A549 (cell line): ENCODE measurements at regions of chr2 and their contacts with region 1.

Region 1: GRCh38 chr2:207769597-207770486 is at the start of gene FZD5:
- DNase-seq: peak; percentile 93 to 97
- ATAC-seq: peak; percentile 82 to 87
- H3K4me3 ChIP-seq: peak within 1 kb of the TSS; percentile 88
- H3K27ac ChIP-seq: peak within 1 kb of the TSS; percentile 94 to 96
- H3K4me1 ChIP-seq: peaks cover 38% of the 10 kb centered on the region
- CTCF ChIP-seq: peak; percentile 64
- EP300 ChIP-seq: no peak; a peak in 1 of 5 replicates
- POLR2A ChIP-seq: peak; percentile 84
- RAD21 ChIP-seq: peak; percentile 67 to 87
- polyA plus RNA-seq, gene FZD5: 6.7 and 7.5 TPM in 2 replicates

Region 2: GRCh38 chr2:207694811-207695281 is 75.0 kb before region 1 on chr2:
- CTCF ChIA-PET with region 1: no interaction called
- POLR2A ChIA-PET with region 1: no interaction called
- DNase-seq: no peak
- ATAC-seq: peak; percentile 56 to 61; a peak in 4 of 6 replicates
- H3K4me3 ChIP-seq: no peak overlapping the region
- H3K27ac ChIP-seq: peak overlapping the region; percentile 15 to 65; a peak in 5 of 6 replicates
- H3K4me1 ChIP-seq: peaks cover 20% of the 10 kb centered on the region
- CTCF ChIP-seq: no peak
- EP300 ChIP-seq: no peak
- POLR2A ChIP-seq: no peak
- RAD21 ChIP-seq: no peak

Region 3: DNA sequence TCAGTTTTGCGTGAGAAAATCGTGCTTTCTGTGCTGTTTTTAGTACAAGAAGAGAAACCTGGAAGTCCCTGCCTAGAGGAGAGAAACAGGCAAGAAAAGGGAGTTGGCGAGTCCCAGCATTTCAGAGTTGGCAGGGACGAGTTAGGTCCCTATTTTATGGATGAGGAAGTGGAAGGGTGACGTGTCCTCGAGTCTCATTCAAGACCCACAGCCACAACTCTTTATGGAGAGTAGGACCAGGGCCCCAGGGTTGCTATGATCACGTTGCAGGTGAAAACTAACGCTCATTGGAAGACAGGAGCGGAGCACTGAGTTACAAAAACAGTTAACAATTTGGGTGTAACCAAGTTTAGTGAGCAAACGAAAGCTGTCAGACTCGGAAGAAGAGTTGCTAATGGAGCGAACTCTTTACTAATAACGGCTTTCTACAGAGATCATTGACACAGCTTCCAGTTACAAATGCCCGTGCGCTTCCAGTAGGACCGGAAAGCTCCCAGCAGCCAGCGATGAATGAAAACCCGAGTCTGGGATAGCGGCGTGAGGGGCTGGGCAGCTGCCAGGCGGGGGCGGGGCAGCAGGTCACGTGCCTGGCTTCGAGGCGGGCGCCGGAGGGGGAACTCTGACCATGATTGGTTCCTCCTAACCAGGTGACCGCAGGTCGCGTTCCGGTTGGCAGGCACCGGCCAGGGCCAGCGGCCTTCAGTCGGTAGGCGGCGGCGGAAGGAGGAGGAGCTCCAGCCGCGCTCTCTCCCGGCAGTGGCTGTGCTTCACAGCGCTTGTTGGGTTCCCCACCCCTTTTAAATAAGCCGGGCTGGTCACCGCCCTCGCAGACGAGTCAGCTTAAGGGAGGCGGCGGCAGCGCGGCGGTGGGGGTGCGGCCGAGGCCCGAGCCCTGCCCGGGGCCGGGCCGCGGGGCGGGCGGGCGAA is 58.8 kb before region 1 on chr2 and contains the start of gene CCNYL1:
- CTCF ChIA-PET with region 1: no interaction called
- POLR2A ChIA-PET with region 1: no interaction called
- DNase-seq: peak; percentile 99
- ATAC-seq: peak; percentile 96 to 98
- H3K4me3 ChIP-seq: peak within 1 kb of the TSS; percentile 85
- H3K27ac ChIP-seq: peak within 1 kb of the TSS; percentile 84 to 94
- H3K4me1 ChIP-seq: peaks cover 31% of the 10 kb centered on the region
- CTCF ChIP-seq: no peak
- EP300 ChIP-seq: no peak
- POLR2A ChIP-seq: peak; percentile 41; the same call in 1 of the 2 replicates
- RAD21 ChIP-seq: peak in 1 of 2 experiments; percentile 4; a peak in 1 of 5 replicates
- polyA plus RNA-seq, gene CCNYL1: 31.6 and 38.7 TPM in 2 replicates

Region 4: GRCh38 chr2:207792244-207792785 is 22.5 kb after region 1 on chr2:
- CTCF ChIA-PET with region 1: interaction called, 27 read pairs
- POLR2A ChIA-PET with region 1: interaction called, 8 read pairs
- DNase-seq: peak; percentile 82 to 88
- ATAC-seq: peak; percentile 94 to 95
- H3K4me3 ChIP-seq: no peak overlapping the region
- H3K27ac ChIP-seq: peak overlapping the region; percentile 86 to 91
- H3K4me1 ChIP-seq: peaks cover 34% of the 10 kb centered on the region
- CTCF ChIP-seq: no peak
- EP300 ChIP-seq: no peak
- POLR2A ChIP-seq: no peak
- RAD21 ChIP-seq: peak in 1 of 2 experiments; percentile 22; a peak in 2 of 5 replicates

Region 5: GRCh38 chr2:207869784-207870778 is 100.2 kb after region 1 on chr2:
- CTCF ChIA-PET with region 1: interaction called, 10 read pairs
- POLR2A ChIA-PET with region 1: interaction called, 3 read pairs
- DNase-seq: peak; percentile 27 to 83
- ATAC-seq: peak; percentile 92 to 96
- H3K4me3 ChIP-seq: no peak overlapping the region
- H3K27ac ChIP-seq: peak overlapping the region; percentile 72 to 83
- H3K4me1 ChIP-seq: peaks cover 41% of the 10 kb centered on the region
- CTCF ChIP-seq: no peak
- EP300 ChIP-seq: peak in 1 of 2 experiments; percentile 28; a peak in 1 of 5 replicates
- POLR2A ChIP-seq: no peak
- RAD21 ChIP-seq: peak in 1 of 2 experiments; percentile 19; a peak in 1 of 5 replicates

Region 6: GRCh38 chr2:207967121-207967520 is 197.3 kb after region 1 on chr2:
- CTCF ChIA-PET with region 1: interaction called, 82 read pairs
- POLR2A ChIA-PET with region 1: no interaction called
- DNase-seq: no peak
- ATAC-seq: no peak
- H3K4me3 ChIP-seq: no peak overlapping the region
- H3K27ac ChIP-seq: no peak overlapping the region
- H3K4me1 ChIP-seq: peaks cover 16% of the 10 kb centered on the region
- CTCF ChIP-seq: no peak
- EP300 ChIP-seq: no peak
- POLR2A ChIP-seq: no peak
- RAD21 ChIP-seq: no peak

Region 7: GRCh38 chr2:207974216-207974605 is 204.4 kb after region 1 on chr2:
- CTCF ChIA-PET with region 1: interaction called, 82 read pairs
- POLR2A ChIA-PET with region 1: no interaction called
- DNase-seq: peak in 1 of 2 experiments; percentile 26
- ATAC-seq: peak; percentile 51 to 59; a peak in 5 of 6 replicates
- H3K4me3 ChIP-seq: no peak overlapping the region
- H3K27ac ChIP-seq: no peak overlapping the region
- H3K4me1 ChIP-seq: peaks cover 24% of the 10 kb centered on the region
- CTCF ChIP-seq: no peak
- EP300 ChIP-seq: no peak
- POLR2A ChIP-seq: no peak
- RAD21 ChIP-seq: no peak